PC-3 (cell line): ENCODE measurements at regions of chr14 and their contacts with region 1.

Region 1: DNA sequence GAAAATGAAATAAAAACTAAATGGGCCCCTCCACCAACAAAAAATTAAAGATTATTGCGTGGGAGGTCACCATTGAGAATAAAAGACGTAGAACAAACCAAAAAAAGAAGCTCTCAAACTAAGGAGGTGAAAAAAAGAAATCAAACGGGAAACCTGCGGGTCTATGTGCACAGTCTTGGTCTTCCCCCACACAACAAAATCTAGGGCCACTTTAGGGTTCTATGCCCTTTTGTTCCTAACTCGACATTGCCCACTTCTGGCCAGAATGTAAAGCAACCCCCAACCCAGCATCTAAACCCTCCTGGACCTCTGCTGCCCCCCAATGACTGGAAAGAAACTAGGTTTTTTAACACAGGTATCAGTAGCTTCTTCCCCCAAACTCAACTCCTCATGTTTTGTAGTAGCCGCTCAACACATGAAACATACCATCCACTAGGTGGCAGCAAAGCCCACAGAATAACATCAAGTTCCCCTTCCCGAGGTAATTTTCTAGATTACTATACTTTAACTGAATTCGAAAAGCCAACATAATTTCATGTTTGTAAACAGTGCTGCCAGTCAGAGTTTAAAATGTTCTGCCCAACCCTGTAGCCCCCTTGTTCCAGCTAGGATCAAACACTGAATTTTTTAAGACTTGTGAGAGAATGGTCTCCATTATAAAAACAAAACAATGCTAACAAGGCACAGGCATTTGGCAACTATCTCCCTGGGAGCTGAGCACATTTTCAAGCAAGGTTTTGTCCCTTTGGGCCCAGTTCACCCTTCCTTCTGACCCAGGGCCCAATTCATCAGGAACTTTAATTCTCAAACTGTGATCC is 18.7 kb downstream of the DAD1 start:
- DNase-seq: peak; percentile 92
- ATAC-seq: peak; percentile 65
- H3K4me3 ChIP-seq: no peak overlapping the region
- H3K27ac ChIP-seq: no peak overlapping the region
- H3K4me1 ChIP-seq: peaks cover 5% of the 10 kb centered on the region
- H3K27me3 ChIP-seq: no peaks in the 10 kb centered on the region
- CTCF ChIP-seq: peak; percentile 97

Region 2: DNA sequence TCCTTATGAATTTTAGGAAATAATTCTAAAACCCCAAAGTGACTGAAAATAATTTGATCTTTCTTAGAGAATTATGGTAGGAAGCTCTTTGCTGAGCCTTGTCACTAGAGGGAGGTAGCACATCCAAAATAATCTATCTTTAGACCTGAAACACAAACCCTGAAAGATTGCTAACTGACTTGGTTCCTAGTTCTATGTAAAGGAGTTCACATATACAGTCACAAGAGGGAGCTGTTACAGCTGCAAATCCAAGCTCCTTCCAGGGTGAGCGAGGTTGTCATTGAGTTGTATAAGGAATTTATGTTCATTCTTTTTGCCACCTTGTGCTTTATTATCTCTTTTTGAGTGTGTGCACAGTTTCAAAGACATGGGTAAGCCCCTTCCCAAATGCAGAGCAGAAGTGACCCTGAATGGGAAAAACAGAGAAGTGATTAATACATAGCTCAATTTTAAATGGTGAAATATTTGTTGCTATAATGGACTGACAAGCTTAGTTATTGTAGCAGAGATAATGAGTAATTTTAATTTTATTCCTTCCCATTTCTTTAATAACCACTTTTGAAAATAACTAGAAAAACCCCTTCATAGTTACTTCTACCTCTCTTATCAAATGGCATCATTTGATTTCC is 369.2 kb before region 1 on chr14:
- CTCF ChIA-PET with region 1: no interaction called
- POLR2A ChIA-PET with region 1: no interaction called
- intact Hi-C with region 1: no loop called
- DNase-seq: peak; percentile 81
- ATAC-seq: peak; percentile 97
- H3K4me3 ChIP-seq: no peak overlapping the region
- H3K27ac ChIP-seq: no peak overlapping the region
- H3K4me1 ChIP-seq: no peaks in the 10 kb centered on the region
- H3K27me3 ChIP-seq: no peaks in the 10 kb centered on the region
- CTCF ChIP-seq: peak; percentile 93

Region 3: DNA sequence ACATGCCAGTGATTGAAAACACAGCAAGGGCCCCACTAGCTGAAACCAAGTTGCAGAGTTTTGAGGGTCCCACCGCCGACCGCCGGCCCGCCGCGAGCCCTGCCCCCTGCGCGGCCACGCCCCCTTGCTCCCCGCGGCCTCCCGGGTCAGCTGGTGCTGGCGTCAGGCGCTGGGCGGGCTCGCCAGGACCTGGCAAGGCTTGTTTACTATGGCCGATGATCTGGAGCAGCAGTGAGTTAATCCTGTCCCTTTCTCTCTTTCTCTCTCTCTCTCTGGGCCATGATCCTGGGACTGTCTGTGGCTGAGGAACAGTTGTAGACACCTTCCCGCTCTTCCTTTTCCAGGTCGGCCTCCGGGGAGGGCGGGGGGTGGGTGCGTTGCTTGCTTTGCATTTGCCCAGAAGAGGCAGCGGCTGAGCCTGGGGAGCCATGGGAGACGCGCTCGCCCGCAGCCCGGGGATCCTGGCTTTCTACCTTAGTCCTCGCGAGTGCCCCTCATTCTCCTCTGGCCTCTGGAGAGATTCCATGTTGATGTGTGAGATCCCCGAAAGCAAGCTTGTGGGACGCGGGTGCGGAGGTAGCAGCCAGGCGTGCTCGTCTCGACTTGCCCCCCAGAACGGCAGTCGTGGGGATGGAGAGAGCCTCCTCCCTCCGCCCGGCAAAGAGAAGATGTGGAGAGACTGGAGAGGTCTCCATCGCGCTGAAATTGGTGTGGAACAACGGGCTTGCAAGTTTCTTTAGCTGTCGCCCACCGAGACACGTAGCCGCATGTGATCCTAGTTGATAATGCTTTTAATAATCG is 28.0 kb after region 1 on chr14 and contains the start of gene ABHD4:
- CTCF ChIA-PET with region 1: interaction called, 5 read pairs
- POLR2A ChIA-PET with region 1: interaction called, 3 read pairs
- intact Hi-C with region 1: loop called (anchors 2 kb)
- DNase-seq: peak; percentile 61
- ATAC-seq: peak; percentile 82
- H3K4me3 ChIP-seq: peak within 1 kb of the TSS; percentile 89
- H3K27ac ChIP-seq: peak within 1 kb of the TSS; percentile 68
- H3K4me1 ChIP-seq: peaks cover 50% of the 10 kb centered on the region
- H3K27me3 ChIP-seq: no peaks in the 10 kb centered on the region
- CTCF ChIP-seq: no peak
- total RNA-seq, gene ABHD4: 9.1 and 9.6 TPM in 2 replicates

Region 4: GRCh38 chr14:22664261-22664660 is 93.9 kb after region 1 on chr14:
- CTCF ChIA-PET with region 1: no interaction called
- POLR2A ChIA-PET with region 1: no interaction called
- intact Hi-C with region 1: no loop called
- DNase-seq: no peak
- ATAC-seq: no peak
- H3K4me3 ChIP-seq: no peak overlapping the region
- H3K27ac ChIP-seq: no peak overlapping the region
- H3K4me1 ChIP-seq: peaks cover 3% of the 10 kb centered on the region; the same call in 1 of the 2 replicates
- H3K27me3 ChIP-seq: no peaks in the 10 kb centered on the region
- CTCF ChIP-seq: no peak

Region 5: DNA sequence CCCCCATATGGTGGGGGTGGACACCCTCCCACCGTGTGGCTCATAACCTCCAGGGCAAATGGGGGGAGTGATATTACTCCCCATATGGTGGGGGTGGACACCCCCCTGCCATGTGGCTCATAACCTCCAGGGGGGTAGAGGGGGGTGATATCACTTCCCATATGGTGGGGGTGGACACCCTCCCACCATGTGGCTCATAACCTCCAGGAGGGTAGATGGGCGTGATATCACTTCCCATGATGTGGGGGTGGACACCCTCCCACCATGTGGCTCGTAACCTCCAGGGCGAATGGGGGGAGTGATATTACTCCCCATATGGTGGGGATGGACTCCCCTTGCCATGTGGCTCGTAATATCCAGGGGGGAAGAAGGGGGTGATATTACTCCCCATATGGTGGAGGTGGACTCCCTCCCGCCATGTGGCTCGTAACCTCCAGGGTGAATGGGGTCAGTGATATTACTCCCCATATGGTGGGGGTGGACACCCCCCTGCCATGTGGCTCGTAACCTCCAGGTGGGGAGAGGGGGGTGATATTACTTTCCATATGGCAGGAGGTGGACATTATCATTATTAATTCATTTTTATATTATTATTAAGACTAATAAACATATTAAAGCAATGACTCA is 145.0 kb after region 1 on chr14:
- CTCF ChIA-PET with region 1: interaction called, 11 read pairs
- POLR2A ChIA-PET with region 1: no interaction called
- intact Hi-C with region 1: loop called (anchors 5 kb)
- DNase-seq: no peak
- ATAC-seq: no peak
- H3K4me3 ChIP-seq: no peak overlapping the region
- H3K27ac ChIP-seq: no peak overlapping the region
- H3K4me1 ChIP-seq: peaks cover 12% of the 10 kb centered on the region
- H3K27me3 ChIP-seq: peaks cover 17% of the 10 kb centered on the region
- CTCF ChIP-seq: no peak